CD8-positive, alpha-beta T cell (primary cell): ENCODE measurements at regions of chr12 and their contacts with region 1.

Region 1: GRCh38 chr12:4857472-4858291 is 52.0 kb upstream of the KCNA1 start:
- DNase-seq: peak; percentile 42 to 79 (median 65)
- ATAC-seq: peak; percentile 87
- H3K4me3 ChIP-seq: peak overlapping the region in 1 of 2 experiments; percentile 3
- H3K4me3 Mint-ChIP-seq: peak overlapping the region; percentile 72
- H3K27ac ChIP-seq: no peak overlapping the region
- H3K27ac Mint-ChIP-seq: no peak overlapping the region
- H3K4me1 ChIP-seq: peaks cover 4% of the 10 kb centered on the region
- H3K4me1 Mint-ChIP-seq: peaks cover 19% of the 10 kb centered on the region
- H3K27me3 ChIP-seq: no peaks in the 10 kb centered on the region
- H3K27me3 Mint-ChIP-seq: peaks cover 32% of the 10 kb centered on the region
- CTCF ChIP-seq: peak; percentile 85

Region 2: GRCh38 chr12:4833524-4833923 is 24.2 kb before region 1 on chr12:
- CTCF ChIA-PET with region 1: interaction called, 12 read pairs
- POLR2A ChIA-PET with region 1: no interaction called
- intact Hi-C with region 1: no loop called
- DNase-seq: no peak
- ATAC-seq: no peak
- H3K4me3 ChIP-seq: no peak overlapping the region
- H3K4me3 Mint-ChIP-seq: no peak overlapping the region
- H3K27ac ChIP-seq: no peak overlapping the region
- H3K27ac Mint-ChIP-seq: no peak overlapping the region
- H3K4me1 ChIP-seq: peaks cover 26% of the 10 kb centered on the region
- H3K4me1 Mint-ChIP-seq: peaks cover 27% of the 10 kb centered on the region
- H3K27me3 ChIP-seq: no peaks in the 10 kb centered on the region
- H3K27me3 Mint-ChIP-seq: peaks cover 3% of the 10 kb centered on the region
- CTCF ChIP-seq: no peak

Region 3: GRCh38 chr12:5003020-5003666 is 145.5 kb after region 1 on chr12:
- CTCF ChIA-PET with region 1: no interaction called
- POLR2A ChIA-PET with region 1: no interaction called
- intact Hi-C with region 1: loop called in 1 of 2 experiments (anchors 2 kb)
- DNase-seq: peak in 6 of 9 experiments; percentile 2 to 36 (median 18)
- ATAC-seq: no peak
- H3K4me3 ChIP-seq: no peak overlapping the region
- H3K4me3 Mint-ChIP-seq: no peak overlapping the region
- H3K27ac ChIP-seq: no peak overlapping the region
- H3K27ac Mint-ChIP-seq: no peak overlapping the region
- H3K4me1 ChIP-seq: no peaks in the 10 kb centered on the region
- H3K4me1 Mint-ChIP-seq: no peaks in the 10 kb centered on the region
- H3K27me3 ChIP-seq: no peaks in the 10 kb centered on the region
- H3K27me3 Mint-ChIP-seq: peaks cover 19% of the 10 kb centered on the region
- CTCF ChIP-seq: no peak

Region 4: GRCh38 chr12:5083955-5084849 is 226.5 kb after region 1 on chr12:
- CTCF ChIA-PET with region 1: interaction called, 3 read pairs
- POLR2A ChIA-PET with region 1: no interaction called
- intact Hi-C with region 1: loop called (anchors 2 to 5 kb)
- DNase-seq: peak in 2 of 9 experiments; percentile 27 to 41
- ATAC-seq: no peak
- H3K4me3 ChIP-seq: no peak overlapping the region
- H3K4me3 Mint-ChIP-seq: no peak overlapping the region
- H3K27ac ChIP-seq: no peak overlapping the region
- H3K27ac Mint-ChIP-seq: no peak overlapping the region
- H3K4me1 ChIP-seq: no peaks in the 10 kb centered on the region
- H3K4me1 Mint-ChIP-seq: no peaks in the 10 kb centered on the region
- H3K27me3 ChIP-seq: no peaks in the 10 kb centered on the region
- H3K27me3 Mint-ChIP-seq: no peaks in the 10 kb centered on the region
- CTCF ChIP-seq: peak; percentile 51

Region 5: GRCh38 chr12:5796171-5796958 is 938.7 kb after region 1 on chr12:
- CTCF ChIA-PET with region 1: no interaction called
- POLR2A ChIA-PET with region 1: no interaction called
- intact Hi-C with region 1: loop called in 1 of 2 experiments (anchors 1 kb)
- DNase-seq: peak in 4 of 9 experiments; percentile 17 to 34 (median 24)
- ATAC-seq: peak; percentile 29
- H3K4me3 ChIP-seq: no peak overlapping the region
- H3K4me3 Mint-ChIP-seq: no peak overlapping the region
- H3K27ac ChIP-seq: no peak overlapping the region
- H3K27ac Mint-ChIP-seq: no peak overlapping the region
- H3K4me1 ChIP-seq: no peaks in the 10 kb centered on the region
- H3K4me1 Mint-ChIP-seq: no peaks in the 10 kb centered on the region
- H3K27me3 ChIP-seq: peaks cover 0 to 2% of the 10 kb centered on the region in 2 experiments
- H3K27me3 Mint-ChIP-seq: peaks cover 4% of the 10 kb centered on the region
- CTCF ChIP-seq: peak; percentile 56

Region 6: GRCh38 chr12:6039894-6040568 is 1182.3 kb after region 1 on chr12:
- CTCF ChIA-PET with region 1: no interaction called
- POLR2A ChIA-PET with region 1: no interaction called
- intact Hi-C with region 1: loop called in 1 of 2 experiments (anchors 10 kb)
- DNase-seq: peak in 8 of 9 experiments; percentile 21 to 74 (median 44)
- ATAC-seq: peak; percentile 72
- H3K4me3 ChIP-seq: no peak overlapping the region
- H3K4me3 Mint-ChIP-seq: no peak overlapping the region
- H3K27ac ChIP-seq: no peak overlapping the region
- H3K27ac Mint-ChIP-seq: no peak overlapping the region
- H3K4me1 ChIP-seq: peaks cover 4% of the 10 kb centered on the region
- H3K4me1 Mint-ChIP-seq: peaks cover 2% of the 10 kb centered on the region
- H3K27me3 ChIP-seq: no peaks in the 10 kb centered on the region
- H3K27me3 Mint-ChIP-seq: no peaks in the 10 kb centered on the region
- CTCF ChIP-seq: peak; percentile 82